Activated CD8-positive, alpha-beta T cell treated with anti-CD3 and anti-CD28 coated beads for 36 hours (primary cell): ENCODE measurements at regions of chr6 and their contacts with region 1.

Region 1: DNA sequence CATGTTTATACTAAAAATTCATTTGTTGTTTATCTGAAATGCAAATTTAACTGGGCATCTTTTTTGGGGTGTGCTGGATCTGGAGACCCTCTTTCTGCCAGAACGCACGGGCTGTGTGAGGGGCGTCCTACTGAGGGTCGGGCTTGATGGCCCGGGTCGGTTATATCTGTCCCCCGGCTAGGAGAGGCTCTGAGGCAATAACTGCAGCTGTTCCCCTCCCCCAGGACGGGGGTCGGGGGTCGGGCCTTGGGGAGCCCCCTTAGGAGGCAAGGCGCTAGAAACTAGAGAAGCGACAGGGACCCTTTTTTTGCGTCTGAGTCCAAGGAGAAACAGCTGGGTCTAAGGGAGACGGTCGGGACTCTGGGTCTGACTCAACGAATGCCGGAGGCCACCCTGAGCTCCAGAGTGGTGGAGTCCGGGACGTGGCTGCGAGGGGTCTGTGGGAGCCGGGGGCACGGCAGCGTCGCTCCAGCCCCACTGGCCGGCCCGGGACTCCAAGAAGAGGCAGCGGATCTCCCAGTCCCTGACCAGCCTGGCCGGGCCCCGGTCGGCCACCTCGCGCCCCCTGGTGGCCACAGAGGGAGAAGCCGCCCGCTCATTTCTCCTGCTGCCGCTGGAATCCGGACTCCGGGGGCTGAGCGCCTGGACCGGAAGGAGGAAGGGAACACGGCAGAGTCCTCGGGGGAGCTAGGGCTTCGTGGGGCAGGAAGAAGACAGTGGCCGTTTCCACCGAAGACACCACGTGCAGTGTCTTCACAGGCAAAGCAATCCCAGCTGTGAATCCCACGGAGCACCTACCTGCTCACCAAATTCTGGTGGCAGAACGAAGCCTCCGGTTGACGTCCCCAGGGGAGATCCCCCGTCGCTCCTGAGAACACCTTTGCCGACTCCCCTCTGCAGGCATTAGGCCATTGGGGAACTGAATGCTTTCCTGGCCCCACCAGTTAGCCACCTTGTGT is 24.0 kb upstream of the SCML4 start:
- DNase-seq: peak; percentile 83
- ATAC-seq: peak; percentile 86
- H3K4me3 Mint-ChIP-seq: peak overlapping the region; percentile 72
- H3K27ac Mint-ChIP-seq: peak overlapping the region; percentile 69
- H3K4me1 Mint-ChIP-seq: peaks cover 20% of the 10 kb centered on the region
- H3K27me3 Mint-ChIP-seq: peaks cover 1% of the 10 kb centered on the region
- CTCF ChIP-seq: peak; percentile 95

Region 2: GRCh38 chr6:107674995-107675738 is 173.0 kb before region 1 on chr6:
- CTCF ChIA-PET with region 1: interaction called, 49 read pairs
- POLR2A ChIA-PET with region 1: interaction called, 7 read pairs
- intact Hi-C with region 1: loop called (anchors 5 kb)
- DNase-seq: peak; percentile 89
- ATAC-seq: peak; percentile 98
- H3K4me3 Mint-ChIP-seq: peak overlapping the region; percentile 53
- H3K27ac Mint-ChIP-seq: peak overlapping the region; percentile 91
- H3K4me1 Mint-ChIP-seq: peaks cover 16% of the 10 kb centered on the region
- H3K27me3 Mint-ChIP-seq: no peaks in the 10 kb centered on the region
- CTCF ChIP-seq: peak; percentile 91

Region 3: DNA sequence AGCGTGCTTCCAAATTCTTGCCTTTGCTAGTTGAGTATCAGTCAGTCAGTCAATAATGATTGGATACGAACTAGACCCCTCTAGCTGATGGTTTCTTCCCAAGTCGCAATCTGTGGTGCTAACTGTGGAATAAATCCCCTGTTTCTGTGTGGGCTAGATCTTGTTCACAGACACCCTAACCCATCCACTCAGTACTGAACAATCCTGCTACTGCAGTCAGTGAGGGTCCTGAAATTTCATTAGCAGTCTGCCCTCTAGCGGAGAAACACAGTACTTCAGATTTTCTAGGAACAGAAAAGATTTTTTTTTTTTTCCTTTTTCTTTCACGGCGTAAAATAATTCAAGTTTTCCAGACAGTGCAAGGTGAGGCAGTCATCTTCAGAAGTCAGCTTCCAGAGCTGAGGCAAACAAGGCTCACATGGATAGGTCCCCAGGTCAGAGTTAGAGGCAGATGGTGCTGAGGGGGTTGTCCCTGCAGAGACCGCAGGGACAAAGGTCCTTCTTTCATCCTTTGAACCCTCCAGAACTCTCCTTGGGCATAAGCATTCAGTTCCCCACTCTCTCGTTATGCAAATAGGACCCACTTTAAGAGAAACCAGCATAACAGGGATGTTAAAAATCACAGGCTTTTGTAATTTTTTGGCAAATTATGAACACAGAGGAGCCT is 143.6 kb before region 1 on chr6:
- CTCF ChIA-PET with region 1: interaction called, 32 read pairs
- POLR2A ChIA-PET with region 1: no interaction called
- intact Hi-C with region 1: no loop called
- DNase-seq: peak; percentile 43
- ATAC-seq: peak; percentile 47
- H3K4me3 Mint-ChIP-seq: no peak overlapping the region
- H3K27ac Mint-ChIP-seq: peak overlapping the region; percentile 58
- H3K4me1 Mint-ChIP-seq: peaks cover 16% of the 10 kb centered on the region
- H3K27me3 Mint-ChIP-seq: no peaks in the 10 kb centered on the region
- CTCF ChIP-seq: peak; percentile 94

Region 4: GRCh38 chr6:107740496-107741190 is 107.5 kb before region 1 on chr6:
- CTCF ChIA-PET with region 1: interaction called, 30 read pairs
- POLR2A ChIA-PET with region 1: interaction called, 4 read pairs
- intact Hi-C with region 1: no loop called
- DNase-seq: peak; percentile 61
- ATAC-seq: peak; percentile 66
- H3K4me3 Mint-ChIP-seq: peak overlapping the region; percentile 75
- H3K27ac Mint-ChIP-seq: peak overlapping the region; percentile 92
- H3K4me1 Mint-ChIP-seq: peaks cover 60% of the 10 kb centered on the region
- H3K27me3 Mint-ChIP-seq: no peaks in the 10 kb centered on the region
- CTCF ChIP-seq: no peak

Region 5: DNA sequence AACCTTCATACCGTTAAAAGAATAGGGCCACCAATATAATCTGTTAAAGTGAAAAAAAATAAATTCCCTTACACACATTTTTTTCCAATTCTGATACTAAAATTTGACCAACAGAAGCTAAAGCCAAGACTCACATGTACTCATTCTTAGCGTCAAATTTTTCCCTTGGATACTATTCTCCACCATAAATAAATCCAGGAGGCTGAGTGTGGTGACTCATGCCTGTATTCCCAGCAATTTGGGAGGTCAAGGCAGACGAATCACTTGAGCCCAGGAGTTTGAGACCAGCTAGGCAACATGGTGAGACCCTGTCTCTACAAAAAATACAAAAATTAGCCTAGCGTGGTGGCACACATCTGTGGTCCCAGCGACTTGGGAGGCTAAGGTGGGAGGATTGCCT is 67.9 kb before region 1 on chr6:
- CTCF ChIA-PET with region 1: interaction called, 23 read pairs
- POLR2A ChIA-PET with region 1: interaction called, 3 read pairs
- intact Hi-C with region 1: no loop called
- DNase-seq: no peak
- ATAC-seq: no peak
- H3K4me3 Mint-ChIP-seq: no peak overlapping the region
- H3K27ac Mint-ChIP-seq: no peak overlapping the region
- H3K4me1 Mint-ChIP-seq: peaks cover 62% of the 10 kb centered on the region
- H3K27me3 Mint-ChIP-seq: no peaks in the 10 kb centered on the region
- CTCF ChIP-seq: no peak

Region 6: GRCh38 chr6:107800564-107801164 is 47.5 kb before region 1 on chr6:
- CTCF ChIA-PET with region 1: interaction called, 27 read pairs
- POLR2A ChIA-PET with region 1: no interaction called
- intact Hi-C with region 1: loop called (anchors 2 kb)
- DNase-seq: no peak
- ATAC-seq: peak; percentile 26
- H3K4me3 Mint-ChIP-seq: no peak overlapping the region
- H3K27ac Mint-ChIP-seq: peak overlapping the region; percentile 1
- H3K4me1 Mint-ChIP-seq: peaks cover 69% of the 10 kb centered on the region
- H3K27me3 Mint-ChIP-seq: no peaks in the 10 kb centered on the region
- CTCF ChIP-seq: peak; percentile 52

Region 7: DNA sequence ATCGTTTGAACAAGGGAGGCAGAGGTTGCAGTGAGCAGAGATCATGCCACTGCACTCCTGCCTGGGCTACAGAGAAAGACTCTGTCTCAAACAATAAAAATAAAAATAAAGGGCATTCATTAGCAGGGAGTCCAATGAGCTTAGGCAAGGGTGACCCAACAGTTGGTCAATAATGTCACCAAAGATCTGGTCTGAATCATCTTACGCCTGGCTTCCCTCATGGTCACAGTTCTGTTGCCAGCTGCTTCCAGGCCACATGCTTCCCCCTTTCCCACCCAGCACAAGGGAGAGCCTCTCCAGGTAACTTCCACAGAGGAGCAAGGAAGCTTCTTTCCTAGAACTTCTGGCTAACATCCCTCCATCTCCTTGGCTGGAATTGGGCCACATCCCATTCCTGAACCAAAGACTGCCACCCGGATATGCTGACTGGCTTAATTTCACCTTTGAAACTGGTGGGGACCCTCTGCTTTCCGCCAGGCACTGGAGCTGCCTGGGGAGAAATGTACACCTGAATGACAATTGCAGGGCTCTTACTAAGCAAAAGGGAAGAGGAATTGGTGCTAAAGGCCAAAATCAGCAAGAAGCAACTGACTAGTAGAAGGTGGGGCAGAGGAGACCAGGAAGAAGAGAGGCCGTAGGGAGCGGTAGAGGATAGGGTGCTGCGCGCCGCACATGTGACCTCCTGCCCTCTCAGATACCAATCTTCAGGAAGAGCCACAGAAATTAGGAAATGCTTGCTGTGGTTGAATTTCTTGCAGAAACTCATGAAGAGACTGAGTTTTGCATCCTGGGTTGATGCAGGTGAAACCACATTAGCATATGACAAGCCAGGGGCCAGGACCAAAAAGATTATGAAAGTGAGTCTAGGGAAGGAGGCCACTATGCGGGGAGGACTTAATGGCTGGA is 15.7 kb before region 1 on chr6:
- CTCF ChIA-PET with region 1: interaction called, 96 read pairs
- POLR2A ChIA-PET with region 1: interaction called, 10 read pairs
- intact Hi-C with region 1: no loop called
- DNase-seq: no peak
- ATAC-seq: peak; percentile 28
- H3K4me3 Mint-ChIP-seq: no peak overlapping the region
- H3K27ac Mint-ChIP-seq: no peak overlapping the region
- H3K4me1 Mint-ChIP-seq: peaks cover 28% of the 10 kb centered on the region
- H3K27me3 Mint-ChIP-seq: no peaks in the 10 kb centered on the region
- CTCF ChIP-seq: no peak

Region 8: DNA sequence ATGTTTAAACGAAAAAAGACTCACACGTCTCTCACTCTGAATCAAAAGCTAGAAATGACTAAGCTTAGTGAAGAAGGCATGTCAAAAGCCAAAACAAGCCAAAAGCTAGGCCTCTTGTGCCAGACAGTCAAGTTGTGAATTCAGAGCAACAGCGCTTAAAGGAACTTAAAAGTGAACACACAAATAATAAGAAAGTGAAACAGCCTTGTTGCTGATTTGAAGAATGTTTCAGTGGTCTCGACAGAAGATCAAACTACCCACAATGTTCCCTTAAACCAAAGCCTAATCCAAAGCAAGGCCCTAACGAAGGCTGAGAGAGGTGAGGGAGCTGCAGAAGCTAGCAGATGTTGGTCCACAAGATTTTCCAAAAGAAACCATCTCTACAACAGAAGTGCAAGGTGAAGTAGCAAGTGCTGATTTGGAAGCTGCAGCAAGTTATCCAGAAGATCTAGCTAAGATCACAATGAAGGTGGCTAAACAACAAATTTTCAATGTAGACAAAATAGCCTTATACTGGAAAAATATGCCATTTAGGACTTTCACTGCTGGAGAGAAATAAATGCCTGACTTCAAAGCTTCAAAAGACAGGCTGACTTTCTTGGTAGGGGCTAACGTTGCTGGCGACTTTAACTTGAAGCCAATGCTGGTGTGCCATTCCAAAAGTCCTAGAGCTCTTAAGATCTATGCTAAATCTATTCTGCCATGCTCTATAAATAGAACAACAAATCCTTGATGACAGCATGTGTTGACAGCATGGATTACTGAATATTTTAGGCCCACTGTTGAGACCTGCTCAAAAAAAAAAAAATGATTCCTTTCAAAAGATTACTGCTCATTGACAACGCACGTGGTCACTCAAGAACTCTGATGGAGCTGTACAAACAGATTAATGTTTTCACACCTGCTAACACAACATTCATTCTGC is 69.6 kb after region 1 on chr6:
- CTCF ChIA-PET with region 1: no interaction called
- POLR2A ChIA-PET with region 1: no interaction called
- intact Hi-C with region 1: no loop called
- DNase-seq: no peak
- ATAC-seq: peak; percentile 51
- H3K4me3 Mint-ChIP-seq: no peak overlapping the region
- H3K27ac Mint-ChIP-seq: peak overlapping the region; percentile 55
- H3K4me1 Mint-ChIP-seq: peaks cover 12% of the 10 kb centered on the region
- H3K27me3 Mint-ChIP-seq: no peaks in the 10 kb centered on the region
- CTCF ChIP-seq: no peak